ENCODE measurements at regions of chr7 and their contacts with region 1.

Region 1: GRCh38 chr7:116984917-116985316 is 31.6 kb downstream of the ST7 start:
- DNase-seq: peak; percentile 43 to 58 (median 56)
- H3K4me3 ChIP-seq: no peak overlapping the region
- H3K27ac ChIP-seq: no peak overlapping the region
- H3K4me1 ChIP-seq: no peaks in the 10 kb centered on the region
- H3K27me3 ChIP-seq: no peaks in the 10 kb centered on the region

Region 2: DNA sequence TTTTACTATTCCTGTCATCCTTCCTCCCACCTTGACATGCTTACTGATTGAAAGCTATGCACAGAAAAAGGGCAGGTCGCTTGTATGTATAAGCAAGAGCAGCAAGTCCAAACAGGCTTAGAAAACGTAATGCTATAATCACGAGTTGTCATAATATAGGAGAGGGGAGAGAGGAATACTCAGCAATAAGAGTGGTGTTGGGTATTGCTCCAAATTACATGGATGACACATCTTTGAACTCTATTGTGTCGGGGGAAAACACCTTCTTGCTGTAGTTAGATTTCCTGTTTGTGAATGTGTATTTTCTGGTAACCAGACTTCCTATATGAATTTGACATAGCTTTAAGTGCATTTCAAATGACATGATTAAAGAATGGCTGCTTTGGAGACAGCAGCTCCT is 305.4 kb before region 1 on chr7:
- CTCF ChIA-PET with region 1: no interaction called
- POLR2A ChIA-PET with region 1: no interaction called
- DNase-seq: peak in 2 of 3 donors; percentile 41
- H3K4me3 ChIP-seq: no peak overlapping the region
- H3K27ac ChIP-seq: no peak overlapping the region
- H3K4me1 ChIP-seq: no peaks in the 10 kb centered on the region
- H3K27me3 ChIP-seq: peaks cover 0 to 4% (median 1%) of the 10 kb centered on the region in 5 experiments

Region 3: DNA sequence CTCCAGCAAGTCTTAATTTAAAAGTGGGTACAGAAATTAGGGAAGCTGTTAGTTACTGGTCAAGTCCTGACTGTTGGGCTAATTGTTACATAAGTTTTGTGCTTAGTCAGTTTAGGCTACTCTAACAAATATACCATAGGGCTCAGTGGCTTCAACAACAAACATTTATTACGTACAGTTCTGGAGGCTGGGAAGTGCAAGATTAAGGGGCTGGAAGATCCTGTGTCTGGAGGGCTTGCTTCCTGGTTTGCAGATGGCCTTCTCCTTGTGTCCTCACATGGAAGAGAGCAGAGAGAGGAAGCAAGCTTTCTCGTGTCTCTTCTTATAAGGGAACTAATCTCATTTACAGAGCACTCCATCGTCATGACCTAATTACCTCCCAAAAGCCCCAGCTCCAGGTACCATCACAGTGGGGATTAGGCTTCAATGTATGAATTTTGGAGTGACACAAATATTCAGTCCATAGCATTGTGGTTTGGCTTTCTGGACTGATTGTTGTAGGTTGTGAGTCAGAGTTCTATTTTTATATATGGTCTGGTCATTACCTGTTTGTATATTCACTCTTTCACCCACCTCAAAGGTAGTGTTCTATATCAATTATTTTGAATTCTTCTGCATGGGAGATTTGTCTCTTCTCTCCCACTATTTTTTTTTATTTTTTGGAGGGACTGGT is 14.5 kb before region 1 on chr7:
- CTCF ChIA-PET with region 1: interaction called, 22 read pairs
- POLR2A ChIA-PET with region 1: no interaction called
- DNase-seq: peak in 1 of 3 donors; percentile 34
- H3K4me3 ChIP-seq: no peak overlapping the region
- H3K27ac ChIP-seq: peak overlapping the region in 1 of 2 experiments; percentile 11
- H3K4me1 ChIP-seq: peaks cover 0 to 19% (median 9%) of the 10 kb centered on the region in 4 experiments
- H3K27me3 ChIP-seq: no peaks in the 10 kb centered on the region

Region 4: DNA sequence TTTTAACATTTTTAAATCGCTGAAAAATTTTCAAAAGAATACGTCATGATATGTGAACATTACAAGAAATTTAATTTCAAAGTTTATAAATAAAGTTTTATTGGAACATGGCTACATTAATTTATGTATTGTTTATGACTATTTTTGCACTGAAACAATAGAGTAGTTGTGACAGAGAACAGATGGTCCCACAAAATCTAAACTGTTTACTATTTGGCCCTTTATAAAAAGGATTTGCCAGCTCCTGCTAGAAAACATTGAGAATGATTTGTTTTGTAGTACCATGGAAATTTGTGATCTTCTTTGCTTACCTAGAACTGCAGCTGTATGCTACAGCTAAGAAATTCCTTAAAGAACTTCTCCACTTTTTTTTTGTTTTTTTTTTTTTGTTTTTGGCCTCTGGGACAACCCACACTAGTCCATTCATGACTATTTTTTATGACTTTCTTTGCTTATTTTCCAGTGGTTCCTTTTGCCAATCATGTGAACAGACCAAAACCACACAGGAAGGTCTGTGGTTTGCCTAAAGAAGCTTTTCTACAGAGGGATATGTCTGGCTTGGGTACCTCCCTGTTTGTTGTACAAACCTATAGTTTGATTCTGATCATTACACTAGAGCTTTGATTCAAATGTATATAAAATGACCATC is 24.1 kb after region 1 on chr7:
- CTCF ChIA-PET with region 1: interaction called, 87 read pairs
- POLR2A ChIA-PET with region 1: no interaction called
- DNase-seq: peak; percentile 79 to 94 (median 92)
- H3K4me3 ChIP-seq: no peak overlapping the region
- H3K27ac ChIP-seq: no peak overlapping the region
- H3K4me1 ChIP-seq: peaks cover 11 to 44% (median 31%) of the 10 kb centered on the region in 4 experiments
- H3K27me3 ChIP-seq: no peaks in the 10 kb centered on the region

Region 5: DNA sequence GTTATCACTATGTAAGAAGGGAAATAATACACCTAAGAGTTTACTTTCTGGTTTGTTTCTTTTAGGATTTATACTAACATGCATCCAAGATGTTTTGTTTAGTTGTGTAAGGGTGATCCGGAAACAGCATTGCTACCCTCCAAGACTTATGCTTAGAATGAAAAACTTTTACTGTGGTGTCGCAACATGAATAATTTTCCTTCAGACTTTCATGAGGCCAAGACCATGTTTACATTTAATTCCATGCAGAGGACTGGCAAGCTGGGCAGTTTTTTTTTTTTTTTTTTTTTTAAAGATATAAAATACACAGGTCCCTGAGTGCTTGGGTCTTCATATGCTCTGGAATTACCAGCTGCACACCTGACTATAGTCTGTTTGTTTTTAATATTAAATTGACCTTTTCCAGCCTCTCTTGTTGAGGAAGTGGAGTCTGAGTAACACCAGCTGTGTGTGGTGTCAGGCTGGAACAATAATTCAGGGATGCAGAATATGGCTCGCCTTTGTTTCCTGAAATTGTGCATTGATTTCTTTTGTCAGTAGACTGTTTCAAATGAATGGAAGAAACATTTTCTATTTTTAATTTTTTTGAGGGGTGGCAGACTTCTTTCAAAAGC is 50.0 kb after region 1 on chr7:
- CTCF ChIA-PET with region 1: interaction called, 10 read pairs
- POLR2A ChIA-PET with region 1: no interaction called
- DNase-seq: no peak
- H3K4me3 ChIP-seq: no peak overlapping the region
- H3K27ac ChIP-seq: no peak overlapping the region
- H3K4me1 ChIP-seq: no peaks in the 10 kb centered on the region
- H3K27me3 ChIP-seq: no peaks in the 10 kb centered on the region

Region 6: GRCh38 chr7:117127585-117128168 is 142.8 kb after region 1 on chr7:
- CTCF ChIA-PET with region 1: interaction called, 278 read pairs
- POLR2A ChIA-PET with region 1: interaction called, 3 read pairs
- DNase-seq: peak; percentile 58 to 81 (median 76)
- H3K4me3 ChIP-seq: no peak overlapping the region
- H3K27ac ChIP-seq: no peak overlapping the region
- H3K4me1 ChIP-seq: peaks cover 0 to 15% (median 10%) of the 10 kb centered on the region in 4 experiments
- H3K27me3 ChIP-seq: no peaks in the 10 kb centered on the region